Natural killer cell (primary cell): ENCODE measurements at regions of chr7 and their contacts with region 1.

Region 1: DNA sequence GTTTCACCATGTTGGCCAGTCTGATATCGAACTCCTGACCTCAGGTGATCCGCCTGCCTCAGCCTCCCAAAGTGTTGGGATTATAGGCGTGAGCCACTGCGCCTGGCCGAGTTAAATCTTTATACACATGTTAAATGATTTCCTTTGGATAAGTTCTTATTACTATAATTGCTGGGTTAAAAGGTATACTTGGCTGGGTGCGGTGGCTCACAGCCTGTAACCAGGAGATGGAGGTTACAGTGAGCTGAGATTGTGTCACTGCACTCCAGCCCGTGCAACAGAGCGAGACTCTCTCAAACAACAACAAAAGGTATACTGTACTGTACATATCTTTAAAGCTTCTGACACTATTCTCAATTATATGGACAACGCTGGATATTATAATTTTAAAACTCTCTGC is 53.2 kb upstream of the CDK13 start:
- DNase-seq: no peak
- ATAC-seq: no peak
- H3K4me3 ChIP-seq: no peak overlapping the region
- H3K4me3 Mint-ChIP-seq: peak overlapping the region; percentile 25
- H3K27ac ChIP-seq: no peak overlapping the region
- H3K27ac Mint-ChIP-seq: no peak overlapping the region
- H3K4me1 ChIP-seq: peaks cover 4% of the 10 kb centered on the region
- H3K4me1 Mint-ChIP-seq: peaks cover 0 to 4% of the 10 kb centered on the region in 2 donors
- H3K27me3 ChIP-seq: no peaks in the 10 kb centered on the region
- H3K27me3 Mint-ChIP-seq: peaks cover 3 to 7% of the 10 kb centered on the region in 2 donors
- CTCF ChIP-seq: no peak

Region 2: GRCh38 chr7:40057292-40057691 is 160.5 kb after region 1 on chr7:
- intact Hi-C with region 1: loop called (anchors 1 kb)
- DNase-seq: no peak
- ATAC-seq: no peak
- H3K4me3 ChIP-seq: no peak overlapping the region
- H3K4me3 Mint-ChIP-seq: no peak overlapping the region
- H3K27ac ChIP-seq: no peak overlapping the region
- H3K27ac Mint-ChIP-seq: peak overlapping the region; percentile 37 to 69
- H3K4me1 ChIP-seq: no peaks in the 10 kb centered on the region
- H3K4me1 Mint-ChIP-seq: peaks cover 17 to 21% of the 10 kb centered on the region in 2 donors
- H3K27me3 ChIP-seq: no peaks in the 10 kb centered on the region
- H3K27me3 Mint-ChIP-seq: no peaks in the 10 kb centered on the region
- CTCF ChIP-seq: no peak